Activated T-helper 2 cell treated with anti-CD3 and anti-CD28 coated beads, Interferon-gamma antibody, Interleukin-2, Interleukin-4, amounts not matched to agents 10 μg/mL and 5 μg/mL and 100 μg/mL, durations not matched to agents 14 hours and 24 hours and 36 hours (primary cell): ENCODE measurements at regions of chr20 and their contacts with region 1.

Region 1: DNA sequence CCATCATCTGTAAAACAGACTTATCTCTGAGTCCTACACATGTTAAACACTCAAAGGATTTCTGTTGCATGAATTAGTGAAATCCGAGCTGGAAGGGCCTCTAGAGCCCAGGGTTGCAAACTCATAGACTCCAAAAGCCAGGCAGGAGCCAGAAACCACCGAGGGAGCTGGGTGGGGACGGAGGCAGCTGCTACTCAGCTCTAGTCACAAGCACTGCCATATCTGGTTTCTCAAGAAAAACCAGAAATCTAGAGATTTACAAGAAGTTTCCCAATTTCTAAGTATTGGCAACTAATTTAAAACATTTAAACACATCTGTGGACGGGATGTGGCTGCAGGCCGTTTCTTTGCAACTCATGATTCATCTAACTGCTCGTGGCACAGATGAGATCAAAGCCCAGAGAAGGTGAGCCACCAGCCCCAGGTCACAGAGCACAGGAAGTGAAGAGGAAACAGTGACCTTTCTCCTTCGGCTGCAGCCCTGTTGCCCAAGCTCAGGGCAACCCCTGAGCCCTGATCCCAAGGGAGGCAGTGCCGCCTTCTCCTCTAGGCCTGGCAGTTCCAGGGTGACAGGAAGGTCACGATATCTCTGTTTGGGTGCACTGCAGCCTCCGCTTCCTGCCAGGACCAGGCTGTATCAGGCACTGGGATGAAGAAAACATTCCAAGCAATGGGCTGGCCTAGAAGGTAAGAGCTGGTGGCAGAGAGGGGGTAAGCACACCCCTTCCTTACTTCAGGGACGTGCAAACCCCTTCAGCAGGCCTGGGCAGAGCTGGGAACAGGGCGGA is 26.4 kb upstream of the PTGIS start:
- DNase-seq: peak; percentile 77
- H3K4me3 Mint-ChIP-seq: peak overlapping the region; percentile 90
- H3K27ac Mint-ChIP-seq: peak overlapping the region; percentile 100
- H3K4me1 Mint-ChIP-seq: peaks cover 78% of the 10 kb centered on the region
- H3K27me3 Mint-ChIP-seq: no peaks in the 10 kb centered on the region

Region 2: DNA sequence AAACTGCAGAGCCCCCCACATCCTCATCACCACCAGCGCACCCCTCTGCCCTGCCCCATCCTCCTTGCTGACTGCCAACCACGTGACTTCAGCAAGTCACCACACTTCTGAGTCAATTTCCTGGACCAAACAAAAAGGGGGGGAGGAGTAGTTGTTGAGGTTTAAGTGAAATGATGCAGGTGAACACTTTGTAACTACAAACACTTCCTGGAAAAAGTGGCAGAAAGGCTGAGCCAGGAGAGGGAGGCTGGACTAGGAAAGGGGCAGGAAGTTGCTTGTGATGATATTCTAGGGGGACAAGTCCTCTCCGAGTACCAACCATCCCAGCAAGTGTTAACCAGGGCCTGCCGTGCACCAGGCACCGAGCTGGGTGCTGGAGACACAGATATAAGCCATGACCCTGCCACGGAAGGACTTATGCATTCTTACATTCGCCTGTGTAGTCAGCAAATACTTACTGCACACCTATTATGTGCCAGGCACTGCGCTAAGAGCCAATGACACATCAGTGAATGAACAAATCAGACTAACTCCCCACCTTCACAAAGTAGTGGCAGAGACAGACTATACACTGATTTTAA is 833.8 kb before region 1 on chr20:
- intact Hi-C with region 1: loop called (anchors 10 kb)
- DNase-seq: peak; percentile 71
- H3K4me3 Mint-ChIP-seq: peak overlapping the region; percentile 64
- H3K27ac Mint-ChIP-seq: peak overlapping the region; percentile 96
- H3K4me1 Mint-ChIP-seq: peaks cover 64% of the 10 kb centered on the region
- H3K27me3 Mint-ChIP-seq: no peaks in the 10 kb centered on the region

Region 3: DNA sequence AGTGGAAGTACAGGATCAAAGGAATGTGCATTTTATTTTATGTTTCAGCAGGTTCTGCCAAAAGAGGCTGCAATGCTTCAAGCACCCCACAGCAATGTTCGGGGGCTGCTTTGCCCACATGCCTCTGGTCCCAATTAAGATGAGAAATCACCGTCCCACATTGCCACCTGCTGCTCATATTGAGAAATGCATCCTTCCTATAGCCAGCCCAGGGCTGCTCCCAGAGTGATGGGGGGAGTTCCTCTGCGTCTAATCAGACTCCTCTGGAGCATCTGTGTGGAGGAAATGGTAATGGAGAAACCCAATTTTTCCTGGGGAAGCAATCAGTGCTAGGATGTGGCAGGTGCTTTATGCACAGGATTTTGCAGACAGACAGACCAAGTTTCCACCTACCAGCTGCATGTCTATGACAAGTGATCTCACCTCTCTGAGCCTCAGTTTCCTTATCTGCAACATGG is 60.1 kb before region 1 on chr20:
- intact Hi-C with region 1: loop called (anchors 1 kb)
- DNase-seq: peak; percentile 56
- H3K4me3 Mint-ChIP-seq: peak overlapping the region; percentile 6
- H3K27ac Mint-ChIP-seq: peak overlapping the region; percentile 83
- H3K4me1 Mint-ChIP-seq: peaks cover 26% of the 10 kb centered on the region
- H3K27me3 Mint-ChIP-seq: peaks cover 3% of the 10 kb centered on the region

Region 4: DNA sequence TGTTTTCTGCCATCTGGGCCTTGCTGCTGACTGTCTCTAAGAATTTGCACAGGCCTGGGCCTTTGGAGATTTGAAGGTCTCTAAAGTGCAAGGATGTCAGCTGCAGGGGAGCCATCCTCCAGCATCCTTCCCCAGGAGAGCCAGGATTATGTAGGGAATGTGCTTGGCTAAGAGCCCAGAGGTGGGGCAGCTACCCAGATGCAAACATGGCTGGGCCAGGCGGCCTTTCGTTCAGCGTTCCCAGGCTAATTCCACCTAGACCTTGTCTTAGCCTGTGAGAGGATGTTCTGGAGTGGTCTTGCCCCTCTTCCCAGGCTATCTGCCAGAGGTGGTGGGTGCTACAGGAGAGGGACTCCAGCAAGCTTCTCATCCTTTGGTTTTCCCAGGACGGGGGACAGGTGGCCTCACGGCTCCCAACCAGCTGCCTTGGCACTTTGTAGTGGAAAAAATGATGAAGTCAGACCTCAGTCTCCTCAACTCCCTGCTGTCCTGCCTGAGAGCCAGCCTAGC is 18.7 kb before region 1 on chr20:
- intact Hi-C with region 1: loop called (anchors 2 kb)
- DNase-seq: no peak
- H3K4me3 Mint-ChIP-seq: no peak overlapping the region
- H3K27ac Mint-ChIP-seq: no peak overlapping the region
- H3K4me1 Mint-ChIP-seq: peaks cover 63% of the 10 kb centered on the region
- H3K27me3 Mint-ChIP-seq: no peaks in the 10 kb centered on the region

Region 5: DNA sequence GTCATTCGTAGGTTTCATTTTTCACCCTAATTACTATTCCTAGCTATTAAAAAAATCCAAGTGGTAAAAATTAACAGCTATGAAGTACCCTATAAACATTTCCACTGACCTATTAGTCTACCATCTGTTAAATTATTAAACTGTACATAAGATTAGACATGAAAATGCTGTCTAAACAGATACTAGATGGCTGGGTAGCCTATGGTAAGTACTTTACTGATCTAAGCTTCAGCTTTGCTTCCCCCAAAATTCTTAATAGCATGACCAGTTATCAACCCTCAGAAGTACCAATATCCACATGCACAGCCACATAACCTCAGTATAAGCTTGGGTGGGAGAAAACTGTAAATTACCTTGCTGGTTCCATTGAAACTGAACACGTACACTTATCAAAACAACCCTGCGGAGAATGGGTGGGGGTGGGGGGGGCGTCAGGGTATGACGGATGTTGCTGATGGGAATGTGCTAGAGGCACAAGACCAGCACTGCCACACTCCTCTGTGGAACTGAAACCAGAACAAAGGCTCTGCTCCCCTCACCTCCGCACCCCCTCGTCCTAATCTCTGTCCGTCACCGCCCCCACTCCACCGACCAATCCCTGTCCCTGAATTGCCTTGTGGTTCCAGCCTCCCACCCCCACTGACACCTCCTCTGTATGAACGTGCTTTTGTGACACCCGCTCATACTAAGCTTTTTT is 74.0 kb after region 1 on chr20:
- intact Hi-C with region 1: no loop called
- DNase-seq: peak; percentile 16
- H3K4me3 Mint-ChIP-seq: no peak overlapping the region
- H3K27ac Mint-ChIP-seq: peak overlapping the region; percentile 55
- H3K4me1 Mint-ChIP-seq: peaks cover 67% of the 10 kb centered on the region
- H3K27me3 Mint-ChIP-seq: no peaks in the 10 kb centered on the region

Region 6: GRCh38 chr20:49742948-49743347 is 148.6 kb after region 1 on chr20:
- intact Hi-C with region 1: no loop called
- DNase-seq: no peak
- H3K4me3 Mint-ChIP-seq: no peak overlapping the region
- H3K27ac Mint-ChIP-seq: no peak overlapping the region
- H3K4me1 Mint-ChIP-seq: no peaks in the 10 kb centered on the region
- H3K27me3 Mint-ChIP-seq: peaks cover 12% of the 10 kb centered on the region

Region 7: GRCh38 chr20:49812463-49813304 is 218.3 kb after region 1 on chr20 and contains the start of gene SLC9A8:
- intact Hi-C with region 1: loop called (anchors 2 kb)
- DNase-seq: peak; percentile 75
- H3K4me3 Mint-ChIP-seq: peak within 1 kb of the TSS; percentile 92
- H3K27ac Mint-ChIP-seq: peak within 1 kb of the TSS; percentile 94
- H3K4me1 Mint-ChIP-seq: peaks cover 43% of the 10 kb centered on the region
- H3K27me3 Mint-ChIP-seq: no peaks in the 10 kb centered on the region
- total RNA-seq, gene SLC9A8: 16.4 and 18.7 TPM in 2 replicates